Tibial artery (tissue), 4 donors: ENCODE measurements at regions of chr22 and their contacts with region 1.

Region 1: GRCh38 chr22:41596776-41597634 is 7.4 kb upstream of the PMM1 start:
- DNase-seq: peak; percentile 41 to 74
- H3K4me3 ChIP-seq: no peak overlapping the region
- H3K27ac ChIP-seq: no peak overlapping the region
- H3K4me1 ChIP-seq: no peaks in the 10 kb centered on the region
- H3K27me3 ChIP-seq: no peaks in the 10 kb centered on the region
- CTCF ChIP-seq: peak; percentile 72 to 87

Region 2: DNA sequence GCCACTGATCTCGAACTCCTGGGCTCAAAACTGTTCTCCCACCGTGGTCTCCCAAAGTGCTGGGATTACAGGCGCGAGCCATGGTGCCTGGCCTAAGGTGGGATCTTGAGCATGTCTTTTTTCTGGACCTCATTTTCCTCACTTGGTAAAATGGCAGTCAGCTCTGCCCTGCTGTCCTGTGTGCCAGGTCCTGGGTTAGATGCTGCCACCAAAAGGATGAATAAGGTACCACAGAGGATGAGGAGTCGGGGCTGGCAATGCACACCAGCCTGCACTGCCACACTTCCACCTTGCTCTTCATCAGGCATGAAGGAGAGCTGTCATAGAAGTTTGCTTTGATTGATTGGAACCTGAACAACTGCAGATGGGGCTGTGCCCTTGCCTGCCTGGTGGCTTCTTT is 95.8 kb before region 1 on chr22:
- intact Hi-C with region 1: no loop called
- DNase-seq: no peak
- H3K4me3 ChIP-seq: no peak overlapping the region
- H3K27ac ChIP-seq: no peak overlapping the region
- H3K4me1 ChIP-seq: peaks cover 0 to 38% (median 23%) of the 10 kb centered on the region in 4 donors
- H3K27me3 ChIP-seq: no peaks in the 10 kb centered on the region
- CTCF ChIP-seq: no peak

Region 3: GRCh38 chr22:41551877-41552582 is 45.0 kb before region 1 on chr22:
- intact Hi-C with region 1: loop called (anchors 5 kb)
- DNase-seq: no peak
- H3K4me3 ChIP-seq: no peak overlapping the region
- H3K27ac ChIP-seq: no peak overlapping the region
- H3K4me1 ChIP-seq: peaks cover 0 to 21% (median 5%) of the 10 kb centered on the region in 4 donors
- H3K27me3 ChIP-seq: no peaks in the 10 kb centered on the region
- CTCF ChIP-seq: no peak

Region 4: DNA sequence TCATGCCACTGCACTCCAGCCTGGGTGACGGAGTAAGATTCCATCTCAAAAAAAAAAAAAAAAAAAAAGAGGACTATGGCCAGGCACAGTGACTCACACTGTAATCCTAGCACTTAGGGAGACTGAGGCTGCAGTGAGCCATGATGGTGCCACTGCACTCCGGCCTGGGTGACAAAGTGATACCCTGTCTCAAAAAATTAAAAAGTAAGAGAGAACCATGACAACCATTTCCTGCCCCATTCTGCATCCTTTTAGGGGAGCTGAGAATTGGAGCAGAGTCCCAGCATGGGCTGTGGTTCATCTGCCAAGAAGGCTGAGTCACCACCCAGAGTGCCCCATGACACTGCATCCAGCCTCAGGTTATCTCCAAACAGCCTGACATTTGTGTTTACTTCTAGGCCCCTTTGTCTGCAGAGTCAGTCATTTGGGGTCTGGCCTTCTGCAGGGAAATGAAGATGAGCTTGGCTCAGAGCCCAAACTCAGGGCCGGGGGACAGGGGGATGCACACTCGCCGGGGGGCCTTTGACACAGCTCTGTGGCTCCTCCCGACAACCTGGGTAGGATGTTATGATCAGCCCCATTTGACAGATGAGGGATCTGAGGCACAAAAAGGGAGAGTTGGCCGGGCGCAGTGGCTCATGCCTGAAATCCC is 31.5 kb before region 1 on chr22:
- intact Hi-C with region 1: no loop called
- DNase-seq: peak; percentile 41 to 87
- H3K4me3 ChIP-seq: no peak overlapping the region
- H3K27ac ChIP-seq: peak overlapping the region; percentile 91 to 97
- H3K4me1 ChIP-seq: peaks cover 0 to 86% (median 54%) of the 10 kb centered on the region in 4 donors
- H3K27me3 ChIP-seq: no peaks in the 10 kb centered on the region
- CTCF ChIP-seq: no peak

Region 5: GRCh38 chr22:41625577-41625976 is 28.6 kb after region 1 on chr22:
- intact Hi-C with region 1: no loop called
- DNase-seq: no peak
- H3K4me3 ChIP-seq: no peak overlapping the region
- H3K27ac ChIP-seq: no peak overlapping the region
- H3K4me1 ChIP-seq: peaks cover 0 to 22% (median 13%) of the 10 kb centered on the region in 4 donors
- H3K27me3 ChIP-seq: no peaks in the 10 kb centered on the region
- CTCF ChIP-seq: no peak

Region 6: GRCh38 chr22:41925655-41926460 is 328.9 kb after region 1 on chr22:
- intact Hi-C with region 1: no loop called
- DNase-seq: no peak
- H3K4me3 ChIP-seq: peak overlapping the region; percentile 17 to 36
- H3K27ac ChIP-seq: no peak overlapping the region
- H3K4me1 ChIP-seq: peaks cover 0 to 11% (median 10%) of the 10 kb centered on the region in 4 donors
- H3K27me3 ChIP-seq: peaks cover 0 to 49% of the 10 kb centered on the region in 2 donors
- CTCF ChIP-seq: peak in 1 of 2 experiments; percentile 28